ENCODE measurements at regions of chr1 and their contacts with region 1.

Region 1: DNA sequence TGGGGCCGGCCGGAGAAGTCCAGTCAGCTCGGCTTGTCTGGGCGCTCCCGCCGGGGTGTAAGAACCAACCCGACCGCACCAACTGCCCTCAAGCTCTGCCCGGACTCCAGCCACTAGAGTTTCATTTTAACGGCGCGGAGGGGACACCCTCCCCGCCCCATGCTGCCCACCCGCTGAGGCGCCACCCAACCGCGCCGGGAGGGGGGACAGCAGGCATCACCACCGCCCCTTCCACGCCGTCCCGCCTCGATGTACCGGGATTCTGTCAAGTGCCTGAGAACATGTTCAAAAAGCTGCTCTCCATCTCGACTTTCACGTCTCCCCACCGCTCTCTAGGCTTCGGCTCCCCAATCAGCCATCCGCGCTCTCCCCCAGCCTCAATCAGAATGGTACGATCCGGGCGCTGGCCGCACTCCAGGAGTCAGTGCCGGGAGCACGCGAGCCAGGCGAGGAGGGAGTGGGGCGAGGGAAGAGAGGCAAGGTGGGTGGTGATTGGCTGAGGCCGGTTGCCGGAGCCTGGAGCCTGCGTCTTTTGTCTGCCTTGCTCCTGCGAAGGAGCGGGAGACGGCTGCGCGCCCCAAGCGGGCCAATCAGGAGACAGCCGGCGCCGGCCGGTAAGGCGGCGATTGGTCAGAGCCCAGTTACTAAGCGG is at the start of gene PIK3R3:
- DNase-seq: peak; percentile 98
- ATAC-seq: peak; percentile 98
- total RNA-seq, gene PIK3R3: 22.6 TPM

Region 2: DNA sequence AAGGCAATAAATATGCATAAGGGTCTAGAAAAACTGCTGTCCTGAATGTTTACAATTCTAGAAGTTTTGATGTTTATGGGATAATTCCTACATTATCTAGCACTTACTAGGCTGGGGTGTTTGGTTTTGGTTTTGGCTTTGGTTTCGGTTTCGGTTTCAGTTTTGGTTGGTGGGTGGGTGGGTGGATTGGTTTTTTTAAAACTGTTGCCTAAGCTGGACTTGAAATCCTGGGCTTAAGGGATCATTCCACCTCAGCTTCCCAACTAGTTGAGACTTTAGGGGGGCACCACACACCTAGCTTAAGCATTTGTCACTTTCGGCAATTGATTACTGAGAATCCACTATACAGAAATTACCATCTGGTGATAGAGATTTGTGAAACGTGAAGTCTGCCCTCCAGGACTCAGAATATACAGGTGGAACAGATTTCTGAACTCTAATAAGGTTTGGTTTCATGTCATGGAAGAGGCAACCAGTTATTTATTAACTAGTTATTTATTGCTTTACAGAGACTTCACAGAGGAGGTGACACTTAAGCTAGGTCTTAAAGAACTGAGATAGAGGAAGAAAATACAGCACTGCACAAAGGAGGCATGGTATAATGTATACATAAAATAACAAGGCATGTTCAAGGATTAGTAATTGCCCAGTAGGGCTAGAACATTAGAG is 69.9 kb before region 1 on chr1:
- intact Hi-C with region 1: no loop called
- DNase-seq: no peak
- ATAC-seq: no peak

Region 3: GRCh38 chr1:46171941-46172720 is 39.5 kb after region 1 on chr1:
- intact Hi-C with region 1: loop called (anchors 1 kb)
- DNase-seq: no peak
- ATAC-seq: no peak

Region 4: GRCh38 chr1:46401964-46402626 is 269.4 kb after region 1 on chr1:
- intact Hi-C with region 1: no loop called
- DNase-seq: peak; percentile 77
- ATAC-seq: peak; percentile 73

Measured in Right ventricle myocardium inferior (tissue), 1 donor.